ENCODE measurements at regions of chr5 and their contacts with region 1.

Region 1: DNA sequence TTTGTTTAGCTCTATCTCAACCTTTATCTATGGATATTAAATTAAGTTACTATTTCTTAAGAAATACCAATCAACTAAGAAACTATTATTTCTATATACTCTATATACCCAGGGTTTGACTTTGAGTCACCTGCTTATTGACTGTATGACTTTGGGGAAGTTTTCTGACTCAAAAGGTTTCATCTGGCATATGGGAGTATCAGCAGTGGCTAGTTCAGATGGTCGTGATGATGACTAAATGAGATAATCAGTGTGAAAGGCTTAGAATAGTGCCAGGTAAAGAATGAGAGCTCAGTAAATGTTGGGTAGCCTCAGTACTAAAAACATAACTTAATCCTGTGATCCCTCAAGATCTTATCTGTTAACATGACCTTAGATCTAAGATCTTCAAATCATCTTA is 179.7 kb upstream of the ISL1 start:
- DNase-seq: no peak
- ATAC-seq: no peak
- H3K4me3 ChIP-seq: no peak overlapping the region
- H3K4me3 Mint-ChIP-seq: no peak overlapping the region
- H3K27ac ChIP-seq: no peak overlapping the region
- H3K27ac Mint-ChIP-seq: no peak overlapping the region
- H3K4me1 ChIP-seq: no peaks in the 10 kb centered on the region
- H3K4me1 Mint-ChIP-seq: no peaks in the 10 kb centered on the region
- H3K27me3 ChIP-seq: no peaks in the 10 kb centered on the region
- H3K27me3 Mint-ChIP-seq: no peaks in the 10 kb centered on the region

Region 2: DNA sequence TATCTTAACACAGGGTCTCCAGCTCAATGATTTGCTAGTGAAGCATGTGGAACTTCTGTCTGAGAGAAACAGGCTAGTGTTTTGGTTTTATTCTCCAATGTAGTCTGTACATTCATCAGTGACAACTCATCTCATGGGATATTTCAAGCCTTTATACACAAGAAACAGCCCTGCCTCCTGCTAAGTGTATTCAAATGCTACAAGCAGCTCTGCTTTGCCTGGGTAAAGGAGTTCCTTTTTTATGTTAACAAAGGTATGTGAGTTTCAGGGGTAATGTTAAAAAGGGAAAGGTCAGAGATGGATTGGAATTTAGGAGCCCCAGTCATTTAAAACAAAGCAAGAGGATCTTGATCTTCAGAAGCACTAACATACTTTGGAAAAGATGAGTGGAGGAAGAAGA is 678.3 kb after region 1 on chr5:
- CTCF ChIA-PET with region 1: no interaction called
- POLR2A ChIA-PET with region 1: interaction called in 1 of 2 experiments, 13 read pairs
- DNase-seq: no peak
- ATAC-seq: no peak
- H3K4me3 ChIP-seq: no peak overlapping the region
- H3K4me3 Mint-ChIP-seq: no peak overlapping the region
- H3K27ac ChIP-seq: no peak overlapping the region
- H3K27ac Mint-ChIP-seq: no peak overlapping the region
- H3K4me1 ChIP-seq: no peaks in the 10 kb centered on the region
- H3K4me1 Mint-ChIP-seq: no peaks in the 10 kb centered on the region
- H3K27me3 ChIP-seq: no peaks in the 10 kb centered on the region
- H3K27me3 Mint-ChIP-seq: no peaks in the 10 kb centered on the region